CD4-positive, alpha-beta T cell (primary cell): ENCODE measurements at regions of chr13 and their contacts with region 1.

Region 1: GRCh38 chr13:40578055-40578454 is 88.4 kb downstream of the FOXO1 start:
- DNase-seq: no peak
- ATAC-seq: no peak
- H3K4me3 ChIP-seq: no peak overlapping the region
- H3K4me3 Mint-ChIP-seq: peak overlapping the region; percentile 35
- H3K27ac ChIP-seq: no peak overlapping the region
- H3K27ac Mint-ChIP-seq: peak overlapping the region; percentile 73
- H3K4me1 ChIP-seq: peaks cover 57% of the 10 kb centered on the region
- H3K4me1 Mint-ChIP-seq: peaks cover 100% of the 10 kb centered on the region
- H3K27me3 ChIP-seq: no peaks in the 10 kb centered on the region
- H3K27me3 Mint-ChIP-seq: no peaks in the 10 kb centered on the region
- CTCF ChIP-seq: no peak

Region 2: DNA sequence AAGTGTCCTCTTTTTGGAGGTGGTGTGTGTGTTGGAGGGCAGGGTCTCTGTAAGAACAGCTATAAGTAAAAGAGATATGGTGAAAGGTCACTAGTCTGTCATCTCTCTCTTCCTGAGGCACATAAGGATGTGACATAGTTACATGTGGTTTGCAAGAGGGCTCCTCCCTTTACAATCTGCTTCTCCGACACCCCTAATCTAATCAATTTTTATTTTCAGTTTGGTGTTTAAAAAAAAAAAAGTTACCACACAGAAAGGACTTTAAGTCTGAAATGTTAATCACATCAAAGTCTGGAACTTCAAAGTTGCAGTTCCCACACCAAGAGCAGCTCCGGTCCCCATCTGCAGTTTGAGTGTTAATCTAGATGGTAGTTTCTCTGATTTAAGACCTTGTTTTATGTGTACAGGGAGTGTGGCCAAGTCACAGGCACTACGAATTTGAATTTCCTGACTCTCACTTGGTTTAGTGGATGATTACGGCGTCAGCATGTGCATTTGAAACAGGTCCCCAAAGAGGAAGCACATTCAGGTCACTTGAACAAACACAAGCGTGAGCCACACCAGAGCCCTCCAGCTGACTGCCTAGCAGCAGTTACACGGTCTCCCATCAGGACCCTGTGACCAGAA is 35.2 kb after region 1 on chr13:
- CTCF ChIA-PET with region 1: no interaction called
- POLR2A ChIA-PET with region 1: interaction called, 3 read pairs
- intact Hi-C with region 1: loop called in 1 of 2 experiments (anchors 5 kb)
- DNase-seq: peak; percentile 27 to 89 (median 42)
- ATAC-seq: peak; percentile 81
- H3K4me3 ChIP-seq: peak overlapping the region; percentile 42
- H3K4me3 Mint-ChIP-seq: peak overlapping the region; percentile 73
- H3K27ac ChIP-seq: peak overlapping the region; percentile 70 to 85
- H3K27ac Mint-ChIP-seq: peak overlapping the region; percentile 87
- H3K4me1 ChIP-seq: peaks cover 73% of the 10 kb centered on the region
- H3K4me1 Mint-ChIP-seq: peaks cover 98% of the 10 kb centered on the region
- H3K27me3 ChIP-seq: no peaks in the 10 kb centered on the region
- H3K27me3 Mint-ChIP-seq: no peaks in the 10 kb centered on the region
- CTCF ChIP-seq: no peak

Region 3: DNA sequence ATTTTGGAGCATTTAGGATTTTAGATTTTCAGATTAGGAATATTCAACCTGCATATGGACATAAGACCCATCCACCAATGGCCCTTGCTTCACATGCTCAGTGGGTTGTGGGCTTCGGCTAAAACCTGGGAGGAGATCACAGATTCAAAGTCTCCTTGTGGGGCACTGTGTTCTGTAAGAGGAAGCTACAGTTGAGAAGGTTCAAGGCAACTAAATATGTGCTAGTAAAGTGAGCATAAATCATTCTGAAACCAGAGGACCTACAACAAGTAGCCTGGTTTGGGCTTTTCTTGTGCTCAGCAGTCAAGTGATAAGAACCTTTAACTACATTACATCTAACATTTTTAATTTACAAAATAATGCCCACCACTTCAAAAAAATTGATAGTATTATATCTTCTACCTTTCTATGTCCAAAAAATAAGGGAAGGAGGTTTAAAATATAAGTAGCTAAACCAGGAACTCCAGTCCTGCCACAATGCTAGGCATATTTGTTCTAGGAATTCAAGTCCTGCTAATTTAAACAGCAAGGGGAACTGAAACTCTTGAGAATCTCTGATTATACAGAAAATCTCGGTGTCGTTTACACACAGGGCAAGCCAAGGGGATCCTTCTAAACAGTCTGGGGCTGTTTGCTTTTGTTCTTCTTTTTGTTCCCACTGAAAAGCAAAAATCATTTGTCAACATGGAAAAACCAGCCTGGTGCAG is 51.8 kb after region 1 on chr13:
- CTCF ChIA-PET with region 1: no interaction called
- POLR2A ChIA-PET with region 1: no interaction called
- intact Hi-C with region 1: loop called in 1 of 2 experiments (anchors 5 kb)
- DNase-seq: no peak
- ATAC-seq: no peak
- H3K4me3 ChIP-seq: no peak overlapping the region
- H3K4me3 Mint-ChIP-seq: peak overlapping the region; percentile 31
- H3K27ac ChIP-seq: no peak overlapping the region
- H3K27ac Mint-ChIP-seq: peak overlapping the region; percentile 53
- H3K4me1 ChIP-seq: peaks cover 52% of the 10 kb centered on the region
- H3K4me1 Mint-ChIP-seq: peaks cover 87% of the 10 kb centered on the region
- H3K27me3 ChIP-seq: no peaks in the 10 kb centered on the region
- H3K27me3 Mint-ChIP-seq: no peaks in the 10 kb centered on the region
- CTCF ChIP-seq: no peak